ENCODE measurements at regions of chr2 and their contacts with region 1.

Region 1: GRCh38 chr2:26577434-26578112 is 63.6 kb downstream of the CIB4 start:
- DNase-seq: peak; percentile 18
- H3K4me3 ChIP-seq: no peak overlapping the region
- H3K27ac ChIP-seq: no peak overlapping the region
- H3K27me3 ChIP-seq: peaks cover 50% of the 10 kb centered on the region
- CTCF ChIP-seq: peak; percentile 93

Region 2: DNA sequence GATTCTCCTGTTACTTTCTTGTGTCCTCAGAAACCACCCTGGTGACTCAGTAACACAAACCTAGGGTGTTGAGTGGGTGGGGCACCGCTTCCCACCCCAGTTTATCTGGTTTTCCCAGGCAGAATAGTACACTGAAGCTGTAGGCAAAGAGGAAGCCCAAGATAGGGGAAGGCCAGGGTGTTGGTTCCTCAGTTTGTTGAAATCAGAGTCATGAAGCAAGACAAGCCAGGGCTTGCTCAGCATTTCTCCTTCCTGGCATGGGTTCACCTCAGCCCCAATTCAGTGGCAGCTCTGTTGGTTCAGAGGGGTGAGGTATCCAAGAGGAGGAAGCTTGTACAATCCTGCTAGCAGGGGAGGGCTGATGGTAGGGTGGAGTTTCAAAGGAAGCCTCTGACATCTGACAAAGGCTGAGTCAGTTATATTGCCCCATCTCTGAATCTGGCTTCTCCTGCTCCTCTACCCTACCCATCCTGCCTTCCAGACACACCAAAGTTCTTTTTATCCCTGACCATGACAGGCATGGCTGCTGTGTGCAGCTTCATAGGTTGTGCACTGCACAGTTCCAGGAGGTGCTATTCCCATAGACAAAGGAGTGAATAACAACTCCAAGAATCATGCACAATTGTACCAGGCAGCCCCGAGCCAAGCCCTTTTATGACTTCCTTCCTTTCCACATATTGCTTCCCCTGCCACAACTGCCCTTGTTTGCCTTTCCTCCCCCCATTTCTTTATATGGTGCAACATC is 568.6 kb before region 1 on chr2:
- CTCF ChIA-PET with region 1: no interaction called
- POLR2A ChIA-PET with region 1: no interaction called
- DNase-seq: peak; percentile 30
- H3K4me3 ChIP-seq: no peak overlapping the region
- H3K27ac ChIP-seq: peak overlapping the region; percentile 47
- H3K27me3 ChIP-seq: no peaks in the 10 kb centered on the region
- CTCF ChIP-seq: no peak

Region 3: GRCh38 chr2:26542194-26542455 is 35.4 kb before region 1 on chr2:
- CTCF ChIA-PET with region 1: interaction called, 10 read pairs
- POLR2A ChIA-PET with region 1: no interaction called
- DNase-seq: no peak
- H3K4me3 ChIP-seq: no peak overlapping the region
- H3K27ac ChIP-seq: no peak overlapping the region
- H3K27me3 ChIP-seq: peaks cover 20% of the 10 kb centered on the region
- CTCF ChIP-seq: no peak

Region 4: DNA sequence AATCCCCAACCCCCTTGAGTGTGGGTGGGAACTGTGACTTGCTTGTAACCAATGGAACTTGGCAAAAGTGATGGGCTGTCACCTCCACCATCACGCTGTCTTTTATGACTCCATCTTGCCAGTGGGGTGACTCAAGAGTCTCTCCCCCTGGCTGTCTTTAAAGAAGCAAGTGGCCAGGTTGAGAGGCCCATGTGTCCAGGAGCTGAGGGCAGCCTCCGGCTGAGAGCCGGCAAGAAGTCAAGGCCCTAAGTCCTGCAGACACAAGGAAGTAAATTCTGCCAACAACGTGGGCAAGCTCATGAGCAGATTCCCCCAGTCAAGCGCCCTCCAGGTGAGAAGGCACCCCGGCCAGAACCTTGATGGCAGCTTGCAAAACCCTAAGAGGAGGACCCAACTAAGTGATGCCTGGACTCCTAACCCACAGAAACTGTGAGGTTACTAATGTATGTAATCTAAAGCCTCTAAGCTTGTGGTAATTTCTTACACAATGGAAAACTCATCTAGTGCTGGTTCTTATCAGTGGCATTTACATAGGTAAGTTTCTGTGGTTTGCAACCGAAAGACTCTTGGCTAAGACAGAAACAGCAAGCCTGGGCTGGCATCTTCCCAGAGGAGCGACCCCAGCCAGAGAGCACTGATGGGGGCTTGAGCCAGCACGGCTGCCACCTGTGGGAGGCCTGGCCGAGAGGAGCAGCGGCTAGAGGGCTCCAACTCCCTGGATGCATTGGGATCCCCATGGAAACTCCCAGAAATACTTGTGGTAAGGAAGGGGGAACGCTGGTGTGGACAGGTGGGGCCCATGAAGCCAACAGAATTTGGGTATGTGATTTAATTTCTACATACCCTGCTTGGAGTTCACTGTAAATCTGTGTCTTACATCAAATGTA is 14.3 kb after region 1 on chr2:
- CTCF ChIA-PET with region 1: interaction called, 16 read pairs
- POLR2A ChIA-PET with region 1: no interaction called
- DNase-seq: no peak
- H3K4me3 ChIP-seq: no peak overlapping the region
- H3K27ac ChIP-seq: no peak overlapping the region
- H3K27me3 ChIP-seq: peaks cover 40% of the 10 kb centered on the region
- CTCF ChIP-seq: no peak

Region 5: GRCh38 chr2:26605195-26605998 is 27.8 kb after region 1 on chr2:
- CTCF ChIA-PET with region 1: interaction called, 11 read pairs
- POLR2A ChIA-PET with region 1: no interaction called
- DNase-seq: no peak
- H3K4me3 ChIP-seq: no peak overlapping the region
- H3K27ac ChIP-seq: no peak overlapping the region
- H3K27me3 ChIP-seq: peaks cover 40% of the 10 kb centered on the region
- CTCF ChIP-seq: peak; percentile 90

Region 6: DNA sequence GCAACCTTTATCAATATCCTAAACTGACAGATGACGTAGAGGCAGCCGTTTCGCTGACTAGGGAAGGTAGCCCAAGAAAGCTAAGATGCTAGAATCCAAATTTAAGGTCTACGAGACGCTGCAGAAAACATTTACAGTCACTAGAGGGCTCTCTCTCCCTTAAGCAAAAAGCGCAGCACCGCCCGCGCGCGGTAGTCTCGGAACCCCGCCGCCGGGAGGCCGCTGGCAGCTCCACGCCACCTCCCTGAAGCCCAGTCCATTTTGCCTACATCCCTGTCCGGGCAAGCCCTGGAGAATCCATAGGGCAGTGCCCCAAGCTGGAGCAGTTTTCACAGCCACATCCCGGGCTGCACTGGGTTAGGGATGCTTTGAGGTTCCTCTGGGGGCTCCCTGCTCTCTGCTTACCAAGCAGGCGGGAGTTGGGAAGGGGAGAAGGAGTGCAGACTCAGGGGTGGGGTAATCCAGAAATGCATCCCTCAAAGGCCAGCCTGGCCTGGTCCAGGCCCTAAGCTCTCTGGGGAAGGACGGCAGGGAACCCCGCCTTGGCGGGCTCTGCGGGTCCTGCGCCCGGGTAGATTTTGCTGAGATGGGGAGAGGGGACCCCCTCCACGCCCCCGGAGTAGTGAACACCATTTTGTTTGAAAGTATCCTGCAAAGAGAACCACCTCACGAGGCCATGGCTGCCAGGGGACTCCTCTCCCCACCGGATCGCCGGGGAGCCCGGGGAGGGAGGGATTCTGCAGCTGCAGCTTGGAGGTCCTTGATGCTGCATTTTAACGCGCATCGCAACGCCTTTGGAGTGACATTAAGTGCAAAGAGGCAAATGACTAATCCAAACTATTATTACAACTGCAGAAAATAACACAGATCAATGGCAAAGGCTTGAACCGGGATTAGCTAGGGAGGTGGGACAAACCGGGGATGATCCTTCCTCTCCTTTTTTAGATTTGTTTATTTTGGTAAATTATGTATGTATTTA is 269.0 kb after region 1 on chr2:
- CTCF ChIA-PET with region 1: no interaction called
- POLR2A ChIA-PET with region 1: no interaction called
- DNase-seq: peak; percentile 52
- H3K4me3 ChIP-seq: 0 out of 2 replicates have a peak overlapping the region, but pooled peaks have one; percentile 7
- H3K27ac ChIP-seq: no peak overlapping the region
- H3K27me3 ChIP-seq: peaks cover 74% of the 10 kb centered on the region
- CTCF ChIP-seq: peak; percentile 85

Measured in AG04450 (cell line).